ENCODE measurements at regions of chr10 and their contacts with region 1.

Region 1: DNA sequence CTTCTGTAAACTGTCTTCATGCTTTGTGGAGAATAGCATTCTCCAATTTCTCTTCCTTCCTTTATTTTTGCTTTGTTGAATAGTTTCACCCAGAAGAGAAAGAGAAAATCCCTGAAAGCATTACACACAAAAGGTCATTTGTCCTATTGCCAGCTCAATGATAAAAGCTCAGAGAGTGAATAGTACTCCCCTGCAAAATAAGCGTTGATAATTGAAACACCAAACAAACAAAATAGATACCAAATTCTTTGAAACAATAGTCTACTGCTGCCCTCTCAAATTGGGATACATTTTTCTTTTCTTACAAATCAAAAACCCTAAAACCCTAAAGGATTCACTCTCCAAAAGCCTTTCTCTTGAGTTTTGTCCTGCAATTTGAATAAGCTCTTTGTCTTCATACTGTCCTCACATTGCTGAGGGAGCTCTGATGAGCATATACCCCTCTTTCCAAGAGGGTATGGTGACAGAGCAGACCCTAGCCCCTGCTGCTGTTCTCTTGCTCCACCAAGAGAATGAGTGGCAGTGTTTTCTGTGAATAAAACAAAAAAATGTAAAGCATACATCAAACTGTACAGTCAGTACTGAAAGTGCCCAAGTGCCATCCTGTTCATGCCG is 134.4 kb downstream of the CSTF2T start:
- DNase-seq: no peak
- H3K4me3 ChIP-seq: no peak overlapping the region
- H3K27ac ChIP-seq: no peak overlapping the region
- H3K27me3 ChIP-seq: no peaks in the 10 kb centered on the region
- CTCF ChIP-seq: no peak

Region 2: GRCh38 chr10:51422311-51423120 is 142.5 kb before region 1 on chr10:
- CTCF ChIA-PET with region 1: no interaction called
- POLR2A ChIA-PET with region 1: no interaction called
- DNase-seq: peak; percentile 32
- H3K4me3 ChIP-seq: no peak overlapping the region
- H3K27ac ChIP-seq: no peak overlapping the region
- H3K27me3 ChIP-seq: no peaks in the 10 kb centered on the region
- CTCF ChIP-seq: peak; percentile 80

Region 3: DNA sequence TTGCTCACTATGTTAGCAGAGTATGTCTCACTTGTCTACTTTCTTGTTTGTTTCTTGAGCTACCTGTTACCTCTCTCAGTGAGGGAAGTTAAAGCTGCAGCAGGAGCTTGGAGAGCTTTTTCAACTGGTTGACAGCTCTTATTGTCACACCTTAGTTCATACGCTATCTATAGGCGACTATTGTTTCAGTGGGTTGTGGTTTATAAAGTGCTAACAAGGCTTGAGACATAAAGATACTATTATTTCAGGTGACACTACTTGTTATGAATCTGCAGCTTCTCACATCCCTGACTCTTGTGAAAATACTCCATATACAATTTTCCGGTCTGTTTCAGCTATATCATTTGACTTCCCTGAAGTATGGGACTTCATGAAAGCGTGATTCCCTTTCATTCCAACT is 33.0 kb before region 1 on chr10:
- CTCF ChIA-PET with region 1: no interaction called
- POLR2A ChIA-PET with region 1: interaction called, 12 read pairs
- DNase-seq: no peak
- H3K4me3 ChIP-seq: no peak overlapping the region
- H3K27ac ChIP-seq: no peak overlapping the region
- H3K27me3 ChIP-seq: no peaks in the 10 kb centered on the region
- CTCF ChIP-seq: no peak